Activated CD4-positive, alpha-beta memory T cell treated with anti-CD3 and anti-CD28 coated beads for 36 hours (primary cell): ENCODE measurements at regions of chr7 and their contacts with region 1.

Region 1: DNA sequence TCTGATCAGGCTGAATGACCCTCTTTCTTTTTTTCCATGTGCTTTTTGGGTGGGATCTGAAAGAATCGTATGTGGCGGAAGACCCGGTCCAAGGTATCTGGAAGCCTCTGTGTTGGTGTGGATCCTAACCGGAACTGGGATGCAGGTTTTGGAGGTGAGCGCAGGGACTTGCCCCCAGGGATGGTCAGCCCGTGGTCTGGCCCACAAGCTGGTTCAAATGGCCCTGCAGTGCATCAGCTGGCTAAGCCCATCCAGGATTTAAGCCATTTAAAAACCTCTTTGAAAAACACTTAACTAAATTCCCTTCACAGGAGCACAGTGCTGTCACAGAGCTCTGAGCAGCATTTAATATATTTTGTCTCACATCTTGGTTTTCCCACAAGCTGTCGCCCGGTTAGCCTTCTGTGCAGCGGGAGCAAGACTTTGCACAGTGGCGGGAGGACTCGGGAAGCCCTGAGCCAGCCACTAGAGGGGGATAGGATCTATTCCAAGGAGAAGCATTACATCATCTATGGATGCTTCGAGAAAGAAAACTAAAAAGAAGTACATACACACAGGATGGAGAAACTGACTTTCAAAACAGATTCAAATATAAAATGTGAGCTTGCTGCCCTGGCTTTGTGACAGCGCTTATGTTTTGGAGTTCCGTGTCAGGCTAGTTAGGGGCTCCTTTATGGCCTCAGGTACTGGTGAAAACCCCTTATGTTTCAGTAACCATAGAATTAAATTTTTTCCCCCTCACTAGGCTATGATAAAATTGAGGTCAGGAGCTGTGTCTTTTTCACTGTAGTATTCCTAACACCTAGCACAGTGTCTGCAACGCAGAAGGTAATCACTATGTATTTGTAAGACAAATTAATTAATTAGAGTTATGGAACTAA is 11.3 kb downstream of the CPA2 start:
- DNase-seq: no peak
- H3K4me3 Mint-ChIP-seq: no peak overlapping the region
- H3K27ac Mint-ChIP-seq: peak overlapping the region; percentile 83
- H3K4me1 Mint-ChIP-seq: peaks cover 31% of the 10 kb centered on the region
- H3K27me3 Mint-ChIP-seq: peaks cover 11% of the 10 kb centered on the region

Region 2: DNA sequence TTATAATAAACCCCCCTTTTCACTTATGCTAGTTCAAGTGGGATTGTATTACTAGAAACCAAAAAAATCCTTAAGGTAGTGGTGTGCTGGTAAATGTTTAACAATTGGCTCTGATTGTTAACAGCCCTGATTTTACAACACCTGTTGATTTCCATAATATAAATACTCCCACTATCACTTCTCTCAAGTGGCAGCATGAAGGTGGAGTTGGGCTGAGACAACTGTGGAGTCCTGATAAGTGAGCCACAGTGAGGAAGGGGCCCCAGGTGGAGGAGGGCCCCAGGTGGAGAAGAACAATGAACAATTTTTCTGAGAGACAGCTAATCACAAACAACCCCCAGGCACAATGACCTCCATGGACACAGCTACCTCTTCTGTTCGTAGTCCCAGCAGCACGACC is 43.9 kb before region 1 on chr7:
- CTCF ChIA-PET with region 1: no interaction called
- POLR2A ChIA-PET with region 1: no interaction called
- intact Hi-C with region 1: no loop called
- DNase-seq: no peak
- H3K4me3 Mint-ChIP-seq: no peak overlapping the region
- H3K27ac Mint-ChIP-seq: no peak overlapping the region
- H3K4me1 Mint-ChIP-seq: no peaks in the 10 kb centered on the region
- H3K27me3 Mint-ChIP-seq: peaks cover 10% of the 10 kb centered on the region

Region 3: GRCh38 chr7:130334274-130334673 is 56.3 kb after region 1 on chr7:
- CTCF ChIA-PET with region 1: no interaction called
- POLR2A ChIA-PET with region 1: no interaction called
- intact Hi-C with region 1: no loop called
- DNase-seq: no peak
- H3K4me3 Mint-ChIP-seq: no peak overlapping the region
- H3K27ac Mint-ChIP-seq: no peak overlapping the region
- H3K4me1 Mint-ChIP-seq: peaks cover 3% of the 10 kb centered on the region
- H3K27me3 Mint-ChIP-seq: no peaks in the 10 kb centered on the region

Region 4: DNA sequence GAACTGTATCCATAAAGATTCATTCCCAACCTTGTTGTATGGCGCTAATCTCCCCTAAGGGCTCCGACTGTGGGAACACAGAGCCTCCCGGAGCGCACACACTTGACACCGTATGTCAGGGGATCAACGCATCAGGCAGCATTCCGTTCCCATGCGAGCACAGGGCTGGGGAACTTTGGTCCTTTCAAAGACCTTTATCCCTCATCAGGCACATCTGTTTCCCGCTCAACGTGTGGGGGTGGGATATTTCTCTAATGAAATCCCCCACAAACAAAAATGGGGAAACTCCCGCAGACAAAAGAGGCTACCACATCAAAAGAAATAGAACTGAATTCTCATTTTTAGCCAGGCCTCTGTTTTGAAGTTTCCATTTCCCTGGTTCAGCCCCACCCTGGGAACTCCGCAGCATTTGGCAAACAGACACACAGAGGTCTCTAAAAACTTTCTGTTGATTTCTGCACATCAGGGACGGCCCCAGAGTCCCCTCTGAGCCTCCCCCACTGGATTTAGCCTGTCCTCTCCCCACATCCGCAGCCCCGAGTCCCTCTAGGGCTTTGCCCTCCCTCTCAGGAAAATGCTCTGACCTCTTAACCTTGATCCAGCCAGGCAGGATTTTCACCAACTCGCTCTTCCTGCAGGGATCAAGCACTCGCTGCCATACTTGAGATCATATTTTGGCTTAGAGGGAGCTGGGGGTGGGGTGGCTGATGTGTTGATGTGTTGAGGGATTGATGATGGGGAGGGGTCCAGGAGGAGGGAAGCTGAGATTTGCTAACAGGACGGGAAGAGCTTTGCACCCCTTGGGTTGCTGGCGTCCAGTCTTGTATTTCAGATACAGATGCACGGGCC is 73.2 kb after region 1 on chr7:
- CTCF ChIA-PET with region 1: no interaction called
- POLR2A ChIA-PET with region 1: no interaction called
- intact Hi-C with region 1: loop called (anchors 1 kb)
- DNase-seq: peak; percentile 47
- H3K4me3 Mint-ChIP-seq: no peak overlapping the region
- H3K27ac Mint-ChIP-seq: peak overlapping the region; percentile 24
- H3K4me1 Mint-ChIP-seq: peaks cover 18% of the 10 kb centered on the region
- H3K27me3 Mint-ChIP-seq: peaks cover 24% of the 10 kb centered on the region

Region 5: GRCh38 chr7:130440527-130441365 is 162.7 kb after region 1 on chr7 and contains the start of gene CEP41:
- CTCF ChIA-PET with region 1: no interaction called
- POLR2A ChIA-PET with region 1: no interaction called
- intact Hi-C with region 1: loop called (anchors 5 kb)
- DNase-seq: peak; percentile 97
- H3K4me3 Mint-ChIP-seq: peak within 1 kb of the TSS; percentile 98
- H3K27ac Mint-ChIP-seq: peak within 1 kb of the TSS; percentile 99
- H3K4me1 Mint-ChIP-seq: peaks cover 21% of the 10 kb centered on the region
- H3K27me3 Mint-ChIP-seq: no peaks in the 10 kb centered on the region
- total RNA-seq, gene CEP41: 14.0 to 16.4 TPM

Region 6: DNA sequence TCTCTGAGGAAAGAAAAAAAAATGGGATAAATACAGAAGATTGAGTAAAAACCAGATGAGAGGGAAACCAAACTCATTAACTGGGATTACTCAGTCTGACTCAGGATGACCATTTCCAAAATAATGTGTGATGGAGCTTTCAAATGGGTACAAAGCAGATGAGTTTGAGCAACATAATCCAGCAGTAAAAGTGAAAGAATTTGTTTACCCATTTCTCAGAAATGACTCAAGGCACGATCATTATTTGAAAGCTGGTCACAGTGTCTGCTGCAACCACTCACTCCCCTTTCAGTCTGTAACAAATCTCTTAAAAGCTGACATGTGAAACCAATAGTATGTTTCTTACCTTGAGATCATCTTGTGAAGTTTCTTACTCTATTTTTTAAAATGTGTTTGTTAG is 560.7 kb after region 1 on chr7:
- CTCF ChIA-PET with region 1: no interaction called
- POLR2A ChIA-PET with region 1: no interaction called
- intact Hi-C with region 1: loop called (anchors 1 kb)
- DNase-seq: peak; percentile 45
- H3K4me3 Mint-ChIP-seq: no peak overlapping the region
- H3K27ac Mint-ChIP-seq: no peak overlapping the region
- H3K4me1 Mint-ChIP-seq: peaks cover 19% of the 10 kb centered on the region
- H3K27me3 Mint-ChIP-seq: peaks cover 39% of the 10 kb centered on the region